Activated naive CD4-positive, alpha-beta T cell treated with anti-CD3 and anti-CD28 coated beads for 36 hours (primary cell): ENCODE measurements at regions of chr10 and their contacts with region 1.

Region 1: DNA sequence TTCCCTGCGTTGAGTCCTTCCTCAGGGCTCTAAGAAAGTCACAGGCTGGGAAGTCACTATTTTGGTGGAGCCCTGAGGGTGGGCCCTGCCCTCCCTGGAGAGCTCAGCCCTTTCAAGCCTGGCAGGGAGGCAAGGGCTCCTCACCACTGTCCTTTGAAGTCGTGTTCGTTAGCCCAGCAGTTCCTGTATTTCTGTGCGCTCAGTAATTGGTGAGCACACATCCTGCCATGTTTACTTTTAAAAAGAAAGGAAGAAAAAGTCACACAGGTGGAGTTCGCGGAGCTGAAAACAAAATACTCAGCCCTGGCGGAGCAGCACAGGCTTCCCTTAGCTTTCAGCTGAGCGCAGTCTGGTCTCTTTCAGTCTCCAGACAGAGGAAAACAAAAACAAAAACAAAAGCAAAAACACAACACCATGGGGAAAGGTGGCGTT is 37.1 kb downstream of the PRKCQ start:
- DNase-seq: peak; percentile 67
- H3K4me3 Mint-ChIP-seq: peak overlapping the region; percentile 87
- H3K27ac Mint-ChIP-seq: peak overlapping the region; percentile 99
- H3K4me1 Mint-ChIP-seq: peaks cover 74% of the 10 kb centered on the region
- H3K27me3 Mint-ChIP-seq: no peaks in the 10 kb centered on the region

Region 2: DNA sequence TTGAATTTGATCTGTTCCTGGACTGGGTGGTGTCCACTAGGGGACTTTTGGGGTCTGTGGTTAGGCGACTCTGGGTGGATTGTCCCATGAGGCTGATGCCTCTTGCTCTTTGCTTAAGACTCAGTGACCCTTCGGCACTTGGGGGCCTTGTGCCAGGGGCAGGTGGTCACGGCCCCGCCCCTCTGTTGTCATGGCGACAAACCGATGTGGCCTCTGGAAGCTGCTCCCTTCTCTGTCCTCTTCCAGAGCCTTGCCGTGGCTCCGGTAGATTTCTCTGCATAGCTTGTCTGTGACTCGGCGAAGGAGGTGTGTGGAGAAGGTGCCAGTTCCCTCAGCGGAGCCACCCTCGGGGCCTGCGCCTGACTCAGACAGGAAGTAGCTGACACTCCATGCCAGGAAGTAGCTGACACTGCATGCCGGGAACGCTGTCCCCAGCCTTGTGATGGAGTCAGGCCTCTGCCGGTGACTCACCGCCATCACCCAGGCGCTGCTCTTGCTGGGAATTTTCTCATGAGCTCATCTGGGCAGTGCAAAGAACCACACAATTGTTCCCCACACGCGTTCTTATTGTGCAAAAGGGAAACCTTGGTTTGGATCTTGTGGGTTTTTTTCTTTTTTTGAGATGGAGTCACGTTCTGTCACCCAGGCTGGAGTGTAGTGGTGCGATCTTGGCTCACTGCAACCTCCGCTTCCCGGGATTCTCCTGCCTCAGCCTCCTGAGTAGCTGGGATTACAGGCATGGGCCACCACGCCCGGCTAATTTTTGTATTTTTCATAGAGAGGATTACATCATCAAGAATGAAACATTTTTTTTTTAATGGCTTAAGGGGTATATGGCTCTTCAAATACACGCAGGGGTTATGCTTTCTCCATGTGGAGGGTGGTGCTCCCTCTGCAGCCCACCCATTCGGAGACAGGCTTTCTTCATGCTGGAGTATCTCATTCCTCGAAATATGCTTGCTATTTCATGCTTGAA is 267.7 kb before region 1 on chr10:
- CTCF ChIA-PET with region 1: no interaction called
- intact Hi-C with region 1: loop called (anchors 5 kb)
- DNase-seq: peak; percentile 98
- H3K4me3 Mint-ChIP-seq: peak overlapping the region; percentile 60
- H3K27ac Mint-ChIP-seq: peak overlapping the region; percentile 94
- H3K4me1 Mint-ChIP-seq: peaks cover 50% of the 10 kb centered on the region
- H3K27me3 Mint-ChIP-seq: no peaks in the 10 kb centered on the region

Region 3: DNA sequence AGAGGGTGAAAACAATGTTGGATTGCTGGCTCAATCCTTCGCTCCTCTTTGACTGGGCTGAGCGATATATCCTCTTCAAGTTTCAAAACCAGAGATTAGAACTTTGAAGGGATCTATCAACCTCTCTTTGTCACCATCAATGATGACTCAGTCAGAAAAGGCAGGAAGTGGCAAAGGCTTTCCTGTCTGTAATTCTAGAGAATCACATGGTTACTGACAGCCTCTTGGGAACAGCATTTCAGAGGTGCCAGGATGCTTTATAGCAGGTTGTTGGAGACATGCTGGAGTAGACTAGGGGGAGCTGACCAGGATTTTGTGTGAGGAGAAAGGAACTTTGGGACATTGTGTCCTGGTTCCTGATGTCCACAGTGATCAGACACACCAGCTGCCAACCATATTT is 44.2 kb before region 1 on chr10:
- CTCF ChIA-PET with region 1: no interaction called
- intact Hi-C with region 1: loop called (anchors 1 kb)
- DNase-seq: peak; percentile 67
- H3K4me3 Mint-ChIP-seq: peak overlapping the region; percentile 20
- H3K27ac Mint-ChIP-seq: peak overlapping the region; percentile 85
- H3K4me1 Mint-ChIP-seq: peaks cover 47% of the 10 kb centered on the region
- H3K27me3 Mint-ChIP-seq: no peaks in the 10 kb centered on the region

Region 4: DNA sequence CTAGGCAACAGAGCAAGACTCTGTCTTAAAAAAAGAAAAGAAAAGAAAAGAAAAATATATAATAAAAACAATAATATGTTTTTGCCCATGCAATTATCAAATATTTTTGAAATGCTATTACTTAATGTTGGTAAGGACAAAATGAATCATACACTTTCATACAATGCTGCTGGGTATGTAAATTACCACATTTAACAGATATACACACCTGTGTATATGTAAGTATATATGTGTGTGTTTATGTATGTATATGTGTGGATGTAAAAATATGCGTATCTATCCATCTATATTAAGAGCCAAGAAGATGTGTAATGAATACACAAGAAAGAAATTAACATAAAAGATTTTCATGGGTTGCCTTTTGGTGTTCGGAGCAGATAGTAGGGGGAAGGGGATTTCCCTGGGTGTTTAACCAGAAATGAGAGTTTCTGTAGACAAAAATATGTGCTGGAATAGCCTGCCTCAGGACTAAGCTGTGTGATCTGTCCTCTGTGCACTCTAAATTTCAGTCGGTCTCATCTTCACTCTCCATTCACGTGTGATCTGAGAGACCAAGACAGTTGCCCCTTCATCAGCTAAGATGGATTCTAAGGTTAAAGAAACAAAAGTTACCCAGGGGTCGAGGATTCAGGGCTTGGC is 24.1 kb before region 1 on chr10:
- CTCF ChIA-PET with region 1: no interaction called
- intact Hi-C with region 1: loop called (anchors 1 kb)
- DNase-seq: peak; percentile 49
- H3K4me3 Mint-ChIP-seq: peak overlapping the region; percentile 55
- H3K27ac Mint-ChIP-seq: peak overlapping the region; percentile 79
- H3K4me1 Mint-ChIP-seq: peaks cover 78% of the 10 kb centered on the region
- H3K27me3 Mint-ChIP-seq: no peaks in the 10 kb centered on the region

Region 5: DNA sequence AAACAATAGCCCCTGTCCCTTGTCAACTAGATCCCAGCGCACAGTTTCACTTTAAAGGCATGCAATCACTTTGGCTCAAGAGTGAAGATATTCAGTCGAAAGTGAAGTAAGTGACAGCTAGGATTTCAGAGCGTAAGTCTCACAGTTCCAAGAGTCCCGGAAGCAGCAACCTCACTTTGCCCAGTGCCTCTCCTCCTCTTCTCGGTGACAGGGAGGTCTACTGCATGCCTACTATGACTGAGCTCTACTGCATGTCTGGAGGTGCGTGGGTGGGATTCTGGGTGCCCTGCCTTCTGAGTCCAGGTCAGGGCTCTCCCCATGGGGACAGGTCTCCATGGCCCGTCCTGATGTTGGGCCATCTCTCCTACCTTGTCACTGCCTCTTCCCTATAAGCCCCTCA is 20.1 kb after region 1 on chr10:
- CTCF ChIA-PET with region 1: interaction called, 4 read pairs
- intact Hi-C with region 1: loop called (anchors 1 kb)
- DNase-seq: peak; percentile 84
- H3K4me3 Mint-ChIP-seq: peak overlapping the region; percentile 61
- H3K27ac Mint-ChIP-seq: peak overlapping the region; percentile 82
- H3K4me1 Mint-ChIP-seq: peaks cover 85% of the 10 kb centered on the region
- H3K27me3 Mint-ChIP-seq: no peaks in the 10 kb centered on the region

Region 6: GRCh38 chr10:6603142-6604125 is 60.4 kb after region 1 on chr10:
- CTCF ChIA-PET with region 1: no interaction called
- intact Hi-C with region 1: no loop called
- DNase-seq: no peak
- H3K4me3 Mint-ChIP-seq: no peak overlapping the region
- H3K27ac Mint-ChIP-seq: no peak overlapping the region
- H3K4me1 Mint-ChIP-seq: peaks cover 72% of the 10 kb centered on the region
- H3K27me3 Mint-ChIP-seq: no peaks in the 10 kb centered on the region

Region 7: GRCh38 chr10:7243873-7244272 is 700.9 kb after region 1 on chr10:
- CTCF ChIA-PET with region 1: no interaction called
- intact Hi-C with region 1: no loop called
- DNase-seq: no peak
- H3K4me3 Mint-ChIP-seq: no peak overlapping the region
- H3K27ac Mint-ChIP-seq: no peak overlapping the region
- H3K4me1 Mint-ChIP-seq: peaks cover 42% of the 10 kb centered on the region
- H3K27me3 Mint-ChIP-seq: no peaks in the 10 kb centered on the region